ENCODE measurements at regions of chr6 and their contacts with region 1.

Region 1: GRCh38 chr6:159852877-159853276 is 37.9 kb upstream of the MAS1 start:
- DNase-seq: peak; percentile 41
- H3K4me3 Mint-ChIP-seq: no peak overlapping the region
- H3K27ac Mint-ChIP-seq: no peak overlapping the region
- H3K4me1 Mint-ChIP-seq: no peaks in the 10 kb centered on the region
- H3K27me3 Mint-ChIP-seq: peaks cover 13% of the 10 kb centered on the region

Region 2: DNA sequence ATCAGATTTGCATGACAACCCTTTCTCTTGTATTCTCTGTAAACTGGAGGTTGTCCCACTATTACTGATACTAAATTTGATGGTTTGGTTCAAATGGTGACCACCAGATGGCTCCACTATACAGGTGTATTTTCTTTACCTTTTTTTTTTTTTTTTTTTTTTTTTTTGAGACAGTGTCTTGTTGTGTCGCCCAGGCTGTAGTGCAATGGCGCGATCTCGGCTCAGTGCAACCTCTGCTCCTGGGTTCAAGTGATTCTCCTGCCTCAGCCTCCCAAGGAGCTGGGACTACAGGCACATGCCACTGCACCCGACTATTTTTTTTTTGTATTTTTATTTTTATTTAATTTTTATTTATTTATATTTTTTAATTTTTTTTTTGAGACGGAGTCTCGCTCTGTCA is 132.2 kb before region 1 on chr6:
- CTCF ChIA-PET with region 1: interaction called, 13 read pairs
- DNase-seq: peak; percentile 59
- H3K4me3 Mint-ChIP-seq: no peak overlapping the region
- H3K27ac Mint-ChIP-seq: no peak overlapping the region
- H3K4me1 Mint-ChIP-seq: peaks cover 30% of the 10 kb centered on the region
- H3K27me3 Mint-ChIP-seq: no peaks in the 10 kb centered on the region

Region 3: DNA sequence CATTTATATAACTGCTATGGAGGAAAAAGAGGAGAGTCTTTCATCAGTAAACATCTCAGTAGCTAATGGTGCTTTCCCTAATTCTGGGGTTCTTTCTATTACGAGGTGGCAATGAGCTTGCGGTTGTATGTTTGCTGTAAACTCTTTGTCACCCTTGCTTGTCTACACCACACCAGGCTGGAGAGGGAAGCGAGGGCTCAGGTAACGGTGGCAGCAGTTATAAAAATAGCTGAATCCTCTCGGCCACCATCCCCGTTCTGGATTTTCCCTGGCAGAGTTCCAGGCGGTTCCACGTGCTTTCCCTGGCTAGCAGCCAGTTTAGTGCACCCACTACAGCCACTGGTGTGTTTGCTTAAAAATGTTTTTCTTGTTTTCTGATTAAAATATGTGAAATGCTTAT is 76.9 kb after region 1 on chr6:
- CTCF ChIA-PET with region 1: no interaction called
- DNase-seq: no peak
- H3K4me3 Mint-ChIP-seq: no peak overlapping the region
- H3K27ac Mint-ChIP-seq: no peak overlapping the region
- H3K4me1 Mint-ChIP-seq: peaks cover 15% of the 10 kb centered on the region
- H3K27me3 Mint-ChIP-seq: peaks cover 19% of the 10 kb centered on the region